ENCODE measurements at regions of chr4 and their contacts with region 1.

Region 1: GRCh38 chr4:177855507-177856197 is 413.4 kb upstream of the AGA start:
- DNase-seq: no peak
- H3K4me3 ChIP-seq: no peak overlapping the region
- H3K27ac ChIP-seq: no peak overlapping the region
- H3K4me1 ChIP-seq: no peaks in the 10 kb centered on the region
- H3K27me3 ChIP-seq: no peaks in the 10 kb centered on the region
- CTCF ChIP-seq: no peak
- EP300 ChIP-seq: no peak
- POLR2A ChIP-seq: no peak

Region 2: GRCh38 chr4:177660223-177660622 is 195.4 kb before region 1 on chr4:
- in situ Hi-C with region 1: no loop called
- intact Hi-C with region 1: loop called (anchors 10 kb)
- DNase-seq: no peak
- H3K4me3 ChIP-seq: no peak overlapping the region
- H3K27ac ChIP-seq: no peak overlapping the region
- H3K4me1 ChIP-seq: no peaks in the 10 kb centered on the region
- H3K27me3 ChIP-seq: no peaks in the 10 kb centered on the region
- CTCF ChIP-seq: no peak
- EP300 ChIP-seq: no peak
- POLR2A ChIP-seq: no peak

Measured in transverse colon (tissue), 4 donors.